ENCODE measurements at regions of chr1 and their contacts with region 1.

Region 1: DNA sequence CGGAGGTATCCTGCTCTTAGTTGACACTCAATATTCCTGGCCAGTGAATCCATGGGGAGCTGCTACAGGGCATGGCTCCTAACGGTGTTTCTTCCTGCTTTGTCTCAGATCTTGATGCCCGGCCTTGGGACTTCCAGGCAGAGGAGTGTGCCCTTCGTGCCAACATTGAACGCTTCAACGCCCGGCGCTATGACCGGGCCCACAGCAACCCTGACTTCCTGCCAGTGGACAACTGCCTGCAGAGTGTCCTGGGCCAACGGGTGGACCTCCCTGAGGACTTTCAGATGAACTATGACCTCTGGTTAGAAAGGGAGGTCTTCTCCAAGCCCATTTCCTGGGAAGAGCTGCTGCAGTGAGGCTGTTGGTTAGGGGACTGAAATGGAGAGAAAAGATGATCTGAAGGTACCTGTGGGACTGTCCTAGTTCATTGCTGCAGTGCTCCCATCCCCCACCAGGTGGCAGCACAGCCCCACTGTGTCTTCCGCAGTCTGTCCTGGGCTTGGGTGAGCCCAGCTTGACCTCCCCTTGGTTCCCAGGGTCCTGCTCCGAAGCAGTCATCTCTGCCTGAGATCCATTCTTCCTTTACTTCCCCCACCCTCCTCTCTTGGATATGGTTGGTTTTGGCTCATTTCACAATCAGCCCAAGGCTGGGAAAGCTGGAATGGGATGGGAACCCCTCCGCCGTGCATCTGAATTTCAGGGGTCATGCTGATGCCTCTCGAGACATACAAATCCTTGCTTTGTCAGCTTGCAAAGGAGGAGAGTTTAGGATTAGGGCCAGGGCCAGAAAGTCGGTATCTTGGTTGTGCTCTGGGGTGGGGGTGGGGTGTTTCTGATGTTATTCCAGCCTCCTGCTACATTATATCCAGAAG is 16.7 kb downstream of the ALX3 start:
- DNase-seq: peak in 2 of 3 donors; percentile 66 to 72
- ATAC-seq: peak; percentile 81 to 90 (median 86)
- H3K4me3 ChIP-seq: no peak overlapping the region
- H3K27ac ChIP-seq: no peak overlapping the region
- H3K4me1 ChIP-seq: peaks cover 0 to 5% (median 0%) of the 10 kb centered on the region in 4 donors
- H3K27me3 ChIP-seq: no peaks in the 10 kb centered on the region
- CTCF ChIP-seq: peak; percentile 80 to 98 (median 96)
- POLR2A ChIP-seq: no peak

Region 2: GRCh38 chr1:110106013-110106941 is 52.5 kb after region 1 on chr1:
- intact Hi-C with region 1: loop called (anchors 5 to 10 kb)
- DNase-seq: peak; percentile 63 to 74 (median 72)
- ATAC-seq: peak; percentile 92 to 97 (median 96)
- H3K4me3 ChIP-seq: no peak overlapping the region
- H3K27ac ChIP-seq: no peak overlapping the region
- H3K4me1 ChIP-seq: no peaks in the 10 kb centered on the region
- H3K27me3 ChIP-seq: no peaks in the 10 kb centered on the region
- CTCF ChIP-seq: peak; percentile 86 to 96 (median 94)
- POLR2A ChIP-seq: no peak

Measured in right lobe of liver (tissue), 6 donors.